ENCODE measurements at regions of chr14 and their contacts with region 1.

Region 1: GRCh38 chr14:33070475-33070874 is 131.8 kb downstream of the NPAS3 start:
- DNase-seq: no peak
- H3K4me3 ChIP-seq: no peak overlapping the region
- H3K27ac ChIP-seq: no peak overlapping the region
- H3K4me1 ChIP-seq: no peaks in the 10 kb centered on the region
- H3K27me3 ChIP-seq: no peaks in the 10 kb centered on the region
- CTCF ChIP-seq: no peak
- EP300 ChIP-seq: no peak
- POLR2A ChIP-seq: no peak

Region 2: DNA sequence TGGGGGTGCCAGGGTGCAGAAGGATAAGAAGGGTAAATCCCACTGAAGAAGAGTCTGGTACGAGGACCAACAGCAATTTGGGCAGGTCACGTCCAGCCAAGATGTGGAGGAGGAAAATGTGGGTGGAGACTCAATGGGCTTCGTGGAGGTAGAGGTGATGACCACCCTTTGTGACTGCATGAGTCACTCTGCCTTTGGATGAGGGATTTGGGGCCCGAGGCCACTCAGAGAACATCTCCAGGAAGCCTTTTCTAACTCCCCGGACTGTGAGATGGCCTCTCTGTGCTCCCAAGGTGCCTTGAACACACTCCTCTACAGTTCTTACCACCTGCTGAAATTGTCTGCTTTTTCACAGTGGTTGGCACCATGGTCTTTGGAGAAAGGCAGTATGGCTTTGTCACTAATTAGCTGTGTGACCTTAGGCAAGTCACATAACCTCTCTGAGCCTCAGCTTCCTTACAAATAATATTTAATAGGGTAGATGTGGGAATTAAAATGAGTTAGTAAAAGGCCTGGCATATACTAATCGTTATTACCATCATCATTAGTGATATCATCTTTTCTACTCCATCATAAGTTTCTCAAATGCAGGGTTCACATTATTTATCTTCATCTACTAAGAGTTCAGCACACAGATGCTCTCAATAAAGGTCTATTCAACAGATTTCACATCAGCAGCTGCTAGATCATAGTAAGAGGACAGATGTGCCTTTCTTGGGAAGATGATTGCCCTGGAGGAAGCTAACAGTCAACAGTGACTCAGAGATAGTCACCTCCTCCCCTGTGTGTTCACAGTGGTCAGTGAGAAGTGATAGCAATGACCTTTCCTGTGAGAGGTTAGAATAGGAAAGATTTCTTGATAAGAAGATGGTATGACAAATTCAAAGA is 1060.3 kb before region 1 on chr14:
- in situ Hi-C with region 1: no loop called
- intact Hi-C with region 1: loop called (anchors 10 kb)
- DNase-seq: no peak
- H3K4me3 ChIP-seq: no peak overlapping the region
- H3K27ac ChIP-seq: no peak overlapping the region
- H3K4me1 ChIP-seq: no peaks in the 10 kb centered on the region
- H3K27me3 ChIP-seq: no peaks in the 10 kb centered on the region
- CTCF ChIP-seq: no peak
- EP300 ChIP-seq: no peak
- POLR2A ChIP-seq: no peak

Region 3: GRCh38 chr14:32779840-32780239 is 290.6 kb before region 1 on chr14:
- in situ Hi-C with region 1: no loop called
- intact Hi-C with region 1: no loop called
- DNase-seq: no peak
- H3K4me3 ChIP-seq: no peak overlapping the region
- H3K27ac ChIP-seq: no peak overlapping the region
- H3K4me1 ChIP-seq: no peaks in the 10 kb centered on the region
- H3K27me3 ChIP-seq: no peaks in the 10 kb centered on the region
- CTCF ChIP-seq: no peak
- EP300 ChIP-seq: no peak
- POLR2A ChIP-seq: no peak

Region 4: DNA sequence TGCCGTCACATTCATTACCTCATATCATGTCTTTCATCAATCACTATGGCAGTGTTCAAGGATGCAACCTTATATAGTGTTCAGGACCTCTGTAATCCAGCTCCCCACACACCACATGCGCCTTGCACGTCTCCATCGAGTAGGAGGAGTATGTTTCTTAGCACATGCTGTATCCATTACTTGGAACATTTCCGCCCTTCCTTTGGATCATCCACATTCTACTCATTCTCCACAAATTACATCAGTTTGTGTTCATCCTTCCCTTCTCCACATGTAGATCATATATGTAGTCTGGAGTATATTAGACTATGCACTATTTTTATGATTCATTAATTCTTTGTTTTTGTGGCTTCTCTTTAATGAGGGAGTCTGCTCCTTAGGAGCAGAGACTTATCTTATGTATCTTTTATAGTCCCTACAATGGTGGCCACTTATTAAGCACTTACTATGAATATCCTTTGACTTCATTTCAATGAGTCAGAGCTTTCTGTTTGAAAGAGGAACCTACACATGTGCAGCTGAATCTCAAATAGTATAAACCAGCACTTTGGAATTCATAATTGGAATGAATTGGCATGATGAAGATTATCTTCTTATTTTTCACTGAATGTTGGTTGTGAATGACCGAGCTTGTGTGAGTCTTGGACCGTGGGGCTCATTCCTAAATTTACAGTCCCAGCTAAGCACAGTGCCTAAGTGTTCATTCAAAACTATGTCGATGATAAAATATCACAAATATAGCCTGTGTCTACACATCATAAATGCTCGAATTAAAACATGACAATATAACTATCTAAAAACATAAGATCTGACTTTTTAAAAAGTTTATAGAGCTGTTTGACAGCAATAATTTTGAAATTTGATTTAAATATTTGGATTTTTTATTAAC is 162.0 kb before region 1 on chr14:
- in situ Hi-C with region 1: no loop called
- intact Hi-C with region 1: no loop called
- DNase-seq: no peak
- H3K4me3 ChIP-seq: no peak overlapping the region
- H3K27ac ChIP-seq: no peak overlapping the region
- H3K4me1 ChIP-seq: no peaks in the 10 kb centered on the region
- H3K27me3 ChIP-seq: no peaks in the 10 kb centered on the region
- CTCF ChIP-seq: no peak
- EP300 ChIP-seq: no peak
- POLR2A ChIP-seq: no peak

Region 5: DNA sequence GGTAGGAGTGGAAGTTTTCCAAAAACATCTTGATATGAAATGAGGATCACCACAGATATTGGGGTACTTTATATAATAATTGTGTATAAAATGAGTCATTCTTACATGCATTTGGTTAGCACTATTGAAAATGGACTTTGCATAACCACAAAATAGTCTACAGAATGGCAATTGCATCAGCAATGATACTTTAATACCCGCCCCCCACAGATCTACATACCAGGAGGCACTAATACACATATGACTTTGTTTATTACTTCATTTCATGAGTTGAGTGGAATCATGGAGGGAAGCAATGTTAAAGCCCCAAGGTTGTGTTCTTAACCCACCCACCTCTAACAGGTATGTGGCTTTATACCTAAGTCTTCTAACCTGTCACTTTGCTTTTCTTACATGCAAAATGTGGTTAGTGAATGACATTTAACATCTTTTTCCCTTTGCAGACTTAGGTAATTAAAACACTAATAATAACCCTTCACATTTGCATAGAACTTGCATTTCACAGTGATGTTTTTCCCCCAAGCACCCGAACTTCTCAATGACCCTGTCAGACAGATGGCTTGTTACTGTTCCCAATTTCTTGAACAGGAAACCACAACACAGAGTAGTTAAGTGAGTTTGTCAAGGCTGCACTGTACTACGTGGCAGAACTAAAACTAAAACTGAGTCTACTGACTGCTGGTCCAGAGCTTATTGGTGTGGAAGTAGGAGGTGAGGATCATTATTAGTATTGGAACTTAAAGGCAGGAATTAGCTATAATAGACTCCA is 29.9 kb before region 1 on chr14:
- in situ Hi-C with region 1: no loop called
- intact Hi-C with region 1: no loop called
- DNase-seq: no peak
- H3K4me3 ChIP-seq: no peak overlapping the region
- H3K27ac ChIP-seq: no peak overlapping the region
- H3K4me1 ChIP-seq: no peaks in the 10 kb centered on the region
- H3K27me3 ChIP-seq: no peaks in the 10 kb centered on the region
- CTCF ChIP-seq: no peak
- EP300 ChIP-seq: no peak
- POLR2A ChIP-seq: no peak

Region 6: DNA sequence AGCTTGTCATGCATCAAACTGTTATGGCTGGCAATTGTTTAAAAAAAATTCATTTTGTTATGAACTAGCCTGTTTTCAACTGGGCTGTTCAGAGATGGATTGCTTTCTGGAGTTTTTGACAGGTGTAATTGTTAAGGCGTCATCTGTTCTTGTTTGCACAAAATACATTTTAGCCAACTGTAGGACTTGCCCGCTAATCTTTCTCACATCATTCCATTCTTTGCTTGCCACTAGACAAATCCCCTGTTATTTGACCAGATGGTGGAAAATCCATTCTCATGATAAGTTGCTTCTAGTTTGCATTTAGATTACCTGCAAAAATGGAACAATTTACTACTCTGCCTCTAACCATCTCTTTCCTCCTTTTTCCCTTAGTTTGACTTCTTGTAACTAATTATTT is 17.5 kb before region 1 on chr14:
- in situ Hi-C with region 1: no loop called
- intact Hi-C with region 1: no loop called
- DNase-seq: no peak
- H3K4me3 ChIP-seq: no peak overlapping the region
- H3K27ac ChIP-seq: no peak overlapping the region
- H3K4me1 ChIP-seq: no peaks in the 10 kb centered on the region
- H3K27me3 ChIP-seq: no peaks in the 10 kb centered on the region
- CTCF ChIP-seq: no peak
- EP300 ChIP-seq: no peak
- POLR2A ChIP-seq: no peak

Measured in transverse colon (tissue), 4 donors.